GM10248 (cell line): ENCODE measurements at regions of chr17 and their contacts with region 1.

Region 1: DNA sequence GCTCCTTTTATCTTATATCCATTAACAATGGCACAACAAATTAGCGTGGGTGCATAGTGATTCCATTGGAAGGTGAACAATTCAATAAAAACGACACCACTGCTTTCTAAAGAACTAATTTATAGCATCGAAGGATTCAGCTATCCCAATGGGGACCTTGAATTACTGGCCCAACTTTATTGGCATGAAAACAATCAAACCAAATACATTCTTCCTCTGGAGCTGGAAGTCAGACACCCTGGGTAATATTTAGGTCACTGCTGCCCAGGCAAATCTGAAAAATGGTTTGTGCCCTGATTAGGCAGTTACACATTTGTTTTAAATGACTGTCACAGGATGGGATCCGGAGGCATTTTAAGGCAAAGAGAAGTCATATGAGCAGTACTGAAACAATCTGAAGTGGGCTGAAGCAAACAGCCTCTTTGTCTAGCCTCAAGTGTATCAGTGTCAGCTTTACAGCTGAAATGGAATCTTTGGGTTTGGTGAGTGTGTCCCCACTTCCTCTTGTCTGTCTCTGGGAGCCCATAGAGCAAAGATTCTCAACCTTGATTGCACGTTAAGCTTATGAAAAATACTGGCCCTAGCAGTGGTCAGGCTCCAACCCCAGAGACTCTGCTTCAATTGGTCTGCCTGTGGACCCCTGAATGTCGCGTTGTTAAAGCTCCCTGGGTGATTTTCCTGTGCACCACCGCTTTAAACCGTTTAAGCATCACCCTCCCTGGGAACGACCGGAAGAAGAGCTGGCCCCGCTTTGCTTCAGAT is 30.3 kb downstream of the CDK5R1 start:
- DNase-seq: peak; percentile 49
- CTCF ChIP-seq: no peak

Region 2: GRCh38 chr17:32495359-32496231 is 21.5 kb before region 1 on chr17:
- CTCF ChIA-PET with region 1: interaction called, 13 read pairs
- POLR2A ChIA-PET with region 1: interaction called, 6 read pairs
- DNase-seq: no peak
- CTCF ChIP-seq: no peak

Region 3: DNA sequence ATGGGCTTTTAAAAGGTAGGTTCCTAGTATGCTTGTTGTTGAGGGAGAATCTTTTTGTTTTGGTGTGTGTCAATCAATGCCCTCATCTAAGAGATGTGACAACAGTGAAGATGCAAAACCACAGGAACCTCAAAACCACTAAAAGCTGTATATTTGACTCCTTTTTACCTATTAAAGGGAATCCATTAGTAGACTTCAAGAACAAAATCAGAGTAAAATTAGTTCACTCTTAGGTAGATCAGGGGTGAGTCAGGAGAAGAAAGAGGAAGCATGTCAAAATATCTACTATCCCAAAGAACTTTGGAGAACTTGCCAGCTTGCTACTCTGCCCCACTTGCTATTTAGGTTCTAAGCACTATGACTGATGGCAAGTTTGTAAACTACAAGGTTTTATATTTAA is 58.8 kb after region 1 on chr17:
- CTCF ChIA-PET with region 1: no interaction called
- POLR2A ChIA-PET with region 1: no interaction called
- DNase-seq: no peak
- CTCF ChIP-seq: no peak

Region 4: DNA sequence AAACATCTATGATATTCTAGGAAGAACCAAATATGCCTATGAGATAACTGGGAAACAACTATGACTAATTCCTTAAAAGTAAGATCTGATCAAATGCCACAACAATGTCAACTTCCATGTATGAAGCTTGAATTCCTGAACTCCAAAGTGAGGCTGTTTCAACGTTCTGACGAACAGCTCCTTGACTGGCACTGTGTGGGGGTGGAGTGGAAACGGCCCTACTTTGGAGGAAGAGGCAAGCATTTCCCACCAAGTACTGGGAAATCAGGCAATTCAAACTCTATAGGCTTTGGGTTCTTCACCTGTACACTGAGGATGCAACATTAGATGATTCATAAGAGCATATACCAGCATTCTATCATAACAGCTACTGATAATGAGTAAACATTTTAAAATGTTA is 156.8 kb after region 1 on chr17:
- CTCF ChIA-PET with region 1: no interaction called
- POLR2A ChIA-PET with region 1: no interaction called
- DNase-seq: no peak
- CTCF ChIP-seq: no peak